ENCODE measurements at regions of chr9 and their contacts with region 1.

Region 1: GRCh38 chr9:15295761-15296405 is 11.1 kb downstream of the TTC39B start:
- DNase-seq: peak in 4 of 14 experiments; percentile 28 to 87 (median 69)
- ATAC-seq: peak; percentile 39
- H3K4me3 ChIP-seq: peak overlapping the region; percentile 54
- H3K4me3 Mint-ChIP-seq: peak overlapping the region; percentile 81
- H3K27ac ChIP-seq: peak overlapping the region; percentile 87 to 88
- H3K27ac Mint-ChIP-seq: peak overlapping the region; percentile 97
- H3K4me1 ChIP-seq: peaks cover 80% of the 10 kb centered on the region
- H3K4me1 Mint-ChIP-seq: peaks cover 88% of the 10 kb centered on the region
- H3K27me3 ChIP-seq: no peaks in the 10 kb centered on the region
- H3K27me3 Mint-ChIP-seq: no peaks in the 10 kb centered on the region
- CTCF ChIP-seq: no peak

Region 2: GRCh38 chr9:15306757-15307534 is 11.1 kb after region 1 on chr9 and contains the start of gene TTC39B:
- CTCF ChIA-PET with region 1: interaction called, 12 read pairs
- POLR2A ChIA-PET with region 1: interaction called, 69 read pairs
- intact Hi-C with region 1: loop called in 1 of 2 experiments (anchors 1 kb)
- DNase-seq: peak; percentile 36 to 90 (median 68)
- ATAC-seq: peak; percentile 60
- H3K4me3 ChIP-seq: peak within 1 kb of the TSS; percentile 99
- H3K4me3 Mint-ChIP-seq: peak within 1 kb of the TSS; percentile 99
- H3K27ac ChIP-seq: peak within 1 kb of the TSS; percentile 75 to 82
- H3K27ac Mint-ChIP-seq: peak within 1 kb of the TSS; percentile 87
- H3K4me1 ChIP-seq: peaks cover 34% of the 10 kb centered on the region
- H3K4me1 Mint-ChIP-seq: peaks cover 64% of the 10 kb centered on the region
- H3K27me3 ChIP-seq: no peaks in the 10 kb centered on the region
- H3K27me3 Mint-ChIP-seq: no peaks in the 10 kb centered on the region
- CTCF ChIP-seq: no peak
- total RNA-seq, gene TTC39B: 37.6 to 43.6 TPM

Measured in CD4-positive, alpha-beta T cell (primary cell).